A673 (cell line): ENCODE measurements at regions of chr18 and their contacts with region 1.

Region 1: GRCh38 chr18:35730691-35731370 is 149.3 kb downstream of the GALNT1 start:
- DNase-seq: no peak
- H3K4me3 ChIP-seq: no peak overlapping the region
- H3K27ac ChIP-seq: no peak overlapping the region
- H3K4me1 ChIP-seq: no peaks in the 10 kb centered on the region
- H3K27me3 ChIP-seq: no peaks in the 10 kb centered on the region
- CTCF ChIP-seq: no peak

Region 2: GRCh38 chr18:35634323-35634722 is 96.5 kb before region 1 on chr18:
- CTCF ChIA-PET with region 1: no interaction called
- POLR2A ChIA-PET with region 1: interaction called, 10 read pairs
- intact Hi-C with region 1: no loop called
- DNase-seq: no peak
- H3K4me3 ChIP-seq: no peak overlapping the region
- H3K27ac ChIP-seq: no peak overlapping the region
- H3K4me1 ChIP-seq: no peaks in the 10 kb centered on the region
- H3K27me3 ChIP-seq: no peaks in the 10 kb centered on the region
- CTCF ChIP-seq: no peak

Region 3: GRCh38 chr18:35703043-35703688 is 27.7 kb before region 1 on chr18:
- CTCF ChIA-PET with region 1: no interaction called
- POLR2A ChIA-PET with region 1: no interaction called
- intact Hi-C with region 1: no loop called
- DNase-seq: no peak
- H3K4me3 ChIP-seq: no peak overlapping the region
- H3K27ac ChIP-seq: no peak overlapping the region
- H3K4me1 ChIP-seq: no peaks in the 10 kb centered on the region
- H3K27me3 ChIP-seq: no peaks in the 10 kb centered on the region
- CTCF ChIP-seq: no peak